ENCODE measurements at regions of chr12 and their contacts with region 1.

Region 1: DNA sequence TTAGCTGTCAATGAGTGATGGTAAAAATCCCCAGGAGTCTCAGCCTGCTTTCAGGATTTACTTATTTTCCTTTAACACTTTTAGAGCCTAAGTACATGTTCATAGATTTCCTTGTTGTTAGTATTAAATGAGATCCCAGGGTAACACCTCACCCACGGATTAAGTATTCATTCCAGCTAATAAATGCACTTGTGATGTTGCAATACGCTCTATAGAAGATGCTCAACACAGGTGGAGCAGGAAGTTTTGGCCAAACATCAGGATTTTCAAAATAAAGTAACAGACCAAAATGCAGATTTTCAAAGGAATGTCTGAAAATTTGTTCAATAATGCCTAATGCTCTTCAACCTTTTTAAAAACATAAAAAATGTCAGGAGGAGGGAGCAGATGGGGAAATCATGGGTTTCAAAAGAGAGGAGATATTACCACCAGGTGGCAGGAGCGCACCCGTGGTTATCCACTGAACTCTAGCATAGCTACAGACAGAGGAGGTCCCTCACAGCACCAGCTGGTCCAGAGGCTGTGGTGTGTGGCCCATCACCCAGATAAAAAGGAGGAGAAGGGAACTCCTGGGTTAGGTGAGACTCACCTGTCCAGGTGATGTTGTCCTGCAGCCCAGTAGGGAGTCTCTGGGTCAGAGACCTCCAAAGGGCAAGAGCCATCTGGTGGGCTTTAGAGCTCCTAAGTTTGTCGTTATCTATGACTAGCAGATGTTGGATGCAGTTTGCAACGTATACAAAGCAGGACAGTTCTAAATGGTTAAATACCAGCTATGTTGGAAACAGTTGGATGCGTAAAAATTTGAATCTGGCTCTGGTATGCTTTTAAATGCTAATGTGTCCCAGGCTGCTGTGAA is 1158.4 kb upstream of the TMEM132C start:
- DNase-seq: peak; percentile 63
- H3K4me3 Mint-ChIP-seq: no peak overlapping the region
- H3K27ac Mint-ChIP-seq: no peak overlapping the region
- H3K4me1 Mint-ChIP-seq: no peaks in the 10 kb centered on the region
- H3K27me3 Mint-ChIP-seq: peaks cover 32% of the 10 kb centered on the region

Region 2: GRCh38 chr12:127083008-127083949 is 25.3 kb before region 1 on chr12:
- CTCF ChIA-PET with region 1: interaction called, 14 read pairs
- POLR2A ChIA-PET with region 1: no interaction called
- intact Hi-C with region 1: no loop called
- DNase-seq: peak; percentile 20
- H3K4me3 Mint-ChIP-seq: peak overlapping the region; percentile 36
- H3K27ac Mint-ChIP-seq: no peak overlapping the region
- H3K4me1 Mint-ChIP-seq: peaks cover 14% of the 10 kb centered on the region
- H3K27me3 Mint-ChIP-seq: peaks cover 4% of the 10 kb centered on the region

Region 3: GRCh38 chr12:127293507-127294310 is 185.1 kb after region 1 on chr12:
- CTCF ChIA-PET with region 1: interaction called, 40 read pairs
- POLR2A ChIA-PET with region 1: no interaction called
- intact Hi-C with region 1: loop called (anchors 1 kb)
- DNase-seq: peak; percentile 64
- H3K4me3 Mint-ChIP-seq: no peak overlapping the region
- H3K27ac Mint-ChIP-seq: no peak overlapping the region
- H3K4me1 Mint-ChIP-seq: no peaks in the 10 kb centered on the region
- H3K27me3 Mint-ChIP-seq: peaks cover 3% of the 10 kb centered on the region

Region 4: GRCh38 chr12:127381048-127381668 is 272.6 kb after region 1 on chr12:
- CTCF ChIA-PET with region 1: interaction called, 39 read pairs
- POLR2A ChIA-PET with region 1: no interaction called
- intact Hi-C with region 1: loop called (anchors 1 kb)
- DNase-seq: peak; percentile 53
- H3K4me3 Mint-ChIP-seq: no peak overlapping the region
- H3K27ac Mint-ChIP-seq: no peak overlapping the region
- H3K4me1 Mint-ChIP-seq: no peaks in the 10 kb centered on the region
- H3K27me3 Mint-ChIP-seq: peaks cover 3% of the 10 kb centered on the region

Measured in activated CD4-positive, alpha-beta memory T cell treated with anti-CD3 and anti-CD28 coated beads for 36 hours (primary cell).